GM10248 (cell line): ENCODE measurements at regions of chr5 and their contacts with region 1.

Region 1: DNA sequence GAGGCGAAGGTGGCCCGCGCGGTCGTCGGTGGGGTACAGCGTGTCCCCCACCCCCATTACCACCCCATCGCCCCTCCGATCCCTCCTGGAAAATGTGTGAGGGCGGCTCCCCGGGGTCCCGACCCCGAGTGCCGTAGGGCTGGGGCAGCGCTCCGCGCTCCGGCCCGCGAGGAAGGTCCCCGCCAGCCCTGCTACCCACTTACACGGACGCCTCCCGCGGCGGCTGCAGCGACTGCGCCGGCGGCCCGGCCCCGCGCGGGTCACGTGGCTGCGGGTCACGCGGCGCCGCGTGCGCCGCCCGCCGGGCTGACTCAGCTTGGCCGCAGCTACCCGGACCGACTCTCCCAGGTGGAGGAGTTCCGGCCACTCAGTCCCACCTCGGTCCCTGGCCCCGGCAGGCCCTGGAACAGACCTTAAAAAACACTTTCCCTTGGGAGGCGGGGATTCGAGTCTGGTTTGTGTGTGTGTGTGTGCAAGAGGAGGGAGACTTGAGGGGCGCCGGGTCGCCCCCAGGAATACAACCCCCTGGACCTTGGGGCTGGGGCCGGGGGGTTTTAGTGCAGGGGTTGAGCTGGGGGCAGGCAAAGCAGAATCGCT is at the start of gene GNPDA1:
- DNase-seq: peak; percentile 87
- CTCF ChIP-seq: no peak

Region 2: DNA sequence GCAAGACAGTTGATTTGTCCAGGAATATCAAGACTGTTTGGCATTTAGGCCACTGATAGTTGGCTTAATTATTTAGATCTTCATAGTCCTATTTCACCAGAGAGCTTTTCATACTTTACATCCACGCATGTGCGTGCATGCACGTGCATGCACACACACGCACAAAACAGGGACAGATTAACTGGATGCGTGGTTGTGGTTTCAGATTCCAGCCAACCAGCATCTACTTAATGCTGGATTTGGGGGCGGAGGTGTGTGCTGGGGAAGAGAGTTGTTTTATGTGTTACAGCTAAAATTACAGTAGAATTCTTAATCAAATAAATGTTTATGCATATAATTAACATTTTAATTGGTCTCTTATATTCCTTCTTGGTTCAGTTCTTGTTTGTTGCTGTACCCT is 36.7 kb before region 1 on chr5:
- CTCF ChIA-PET with region 1: interaction called, 29 read pairs
- POLR2A ChIA-PET with region 1: no interaction called
- DNase-seq: no peak
- CTCF ChIP-seq: no peak

Region 3: DNA sequence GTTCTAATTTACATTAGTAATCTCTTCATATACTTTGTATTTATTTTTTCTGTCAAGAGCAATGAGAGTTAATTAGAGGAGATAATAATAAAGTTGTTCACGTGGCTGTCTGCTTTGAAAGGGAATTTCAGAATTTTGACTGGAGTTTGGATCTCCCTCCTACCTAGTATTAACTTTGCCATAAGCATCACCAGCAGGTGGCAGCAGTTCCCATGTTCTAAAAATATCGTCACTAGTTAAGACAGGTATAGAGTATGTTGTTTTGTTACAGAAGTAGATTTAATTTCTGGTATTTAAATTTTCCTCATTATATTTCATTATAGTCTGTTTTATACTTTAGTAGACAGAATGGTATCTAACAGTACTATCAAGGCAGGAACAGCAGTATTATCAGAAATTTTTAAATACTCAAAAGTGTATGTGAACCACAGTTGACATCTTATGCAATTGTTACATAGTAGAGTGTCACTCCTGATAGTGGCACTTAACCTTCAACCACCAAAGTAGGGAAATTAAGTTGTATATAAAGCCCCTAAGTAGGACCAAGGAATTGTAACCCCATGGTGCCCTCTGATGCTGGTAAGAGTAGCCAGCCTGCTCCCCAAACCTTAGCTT is 20.4 kb before region 1 on chr5:
- CTCF ChIA-PET with region 1: interaction called, 225 read pairs
- POLR2A ChIA-PET with region 1: no interaction called
- DNase-seq: peak; percentile 54
- CTCF ChIP-seq: peak; percentile 70

Region 4: GRCh38 chr5:142145106-142145900 is 132.4 kb after region 1 on chr5:
- CTCF ChIA-PET with region 1: interaction called, 11 read pairs
- POLR2A ChIA-PET with region 1: no interaction called
- DNase-seq: peak; percentile 50
- CTCF ChIP-seq: peak; percentile 79